ENCODE measurements at regions of chr10 and their contacts with region 1.

Region 1: DNA sequence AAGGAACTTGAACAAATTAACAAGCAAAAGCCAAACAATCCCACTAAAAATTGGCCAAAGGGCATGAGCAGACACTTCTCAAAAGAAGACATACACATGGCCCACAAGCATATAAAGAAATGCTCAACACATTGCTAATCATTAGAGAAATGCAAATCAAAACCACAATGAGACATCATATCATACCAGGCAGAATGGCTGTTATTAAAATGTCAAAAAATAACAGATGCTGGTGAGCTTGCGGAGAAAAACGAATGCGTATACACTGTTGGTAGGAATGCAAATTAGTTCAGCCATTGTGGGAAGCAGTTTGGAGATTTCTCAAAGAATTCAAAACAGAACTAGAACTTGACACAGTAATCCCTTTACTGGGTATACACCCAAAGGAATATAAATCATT is 311.7 kb upstream of the HPS1 start:
- DNase-seq: no peak
- H3K4me3 ChIP-seq: no peak overlapping the region
- CTCF ChIP-seq: no peak
- POLR2A ChIP-seq: no peak

Region 2: GRCh38 chr10:97916586-97916985 is 841.9 kb before region 1 on chr10:
- intact Hi-C with region 1: no loop called
- DNase-seq: peak in 1 of 2 donors; percentile 75
- H3K4me3 ChIP-seq: no peak overlapping the region
- CTCF ChIP-seq: no peak
- POLR2A ChIP-seq: no peak

Region 3: GRCh38 chr10:98664331-98665042 is 94.0 kb before region 1 on chr10:
- intact Hi-C with region 1: no loop called
- DNase-seq: no peak
- H3K4me3 ChIP-seq: no peak overlapping the region
- CTCF ChIP-seq: no peak
- POLR2A ChIP-seq: no peak

Region 4: GRCh38 chr10:99224766-99225165 is 466.3 kb after region 1 on chr10:
- intact Hi-C with region 1: loop called (anchors 5 kb)
- DNase-seq: no peak
- H3K4me3 ChIP-seq: no peak overlapping the region
- CTCF ChIP-seq: no peak
- POLR2A ChIP-seq: no peak